ENCODE measurements at regions of chr18 and their contacts with region 1.

Region 1: DNA sequence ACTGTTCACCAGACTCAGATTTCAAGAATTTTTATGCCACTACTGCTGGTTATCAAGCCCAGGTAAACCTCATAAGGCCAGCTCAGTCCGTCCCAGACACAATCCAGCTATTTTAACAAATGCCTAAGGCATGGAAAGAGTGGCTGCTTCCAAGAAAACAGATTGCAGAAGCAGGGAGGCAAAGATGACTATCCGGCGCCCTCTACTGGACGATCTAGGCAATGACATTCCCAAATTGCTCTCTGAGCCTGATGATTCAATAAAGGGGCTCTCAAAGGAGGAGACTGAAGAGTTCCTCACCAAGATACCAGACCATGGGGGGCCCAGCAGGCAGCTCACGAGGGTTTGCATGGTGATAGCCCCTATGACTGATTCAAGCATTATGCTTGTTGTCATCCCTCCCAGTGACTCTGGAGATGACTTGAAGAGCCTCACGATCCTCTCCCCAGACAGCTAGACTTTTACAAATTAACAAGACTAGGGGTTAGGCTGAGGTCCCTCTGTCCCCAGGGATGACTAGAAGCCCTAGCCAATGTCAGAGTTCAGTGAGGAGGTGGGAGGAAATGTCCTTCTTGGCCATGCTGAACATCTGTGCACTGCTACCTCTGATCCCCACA is 25.0 kb downstream of the SERPINB8 start:
- H3K4me3 Mint-ChIP-seq: no peak overlapping the region
- H3K27ac Mint-ChIP-seq: no peak overlapping the region
- H3K4me1 Mint-ChIP-seq: peaks cover 5% of the 10 kb centered on the region
- H3K27me3 Mint-ChIP-seq: no peaks in the 10 kb centered on the region

Region 2: GRCh38 chr18:63890950-63891304 is 104.0 kb before region 1 on chr18:
- intact Hi-C with region 1: loop called (anchors 5 kb)
- H3K4me3 Mint-ChIP-seq: no peak overlapping the region
- H3K27ac Mint-ChIP-seq: peak overlapping the region; percentile 62
- H3K4me1 Mint-ChIP-seq: peaks cover 80% of the 10 kb centered on the region
- H3K27me3 Mint-ChIP-seq: no peaks in the 10 kb centered on the region

Region 3: DNA sequence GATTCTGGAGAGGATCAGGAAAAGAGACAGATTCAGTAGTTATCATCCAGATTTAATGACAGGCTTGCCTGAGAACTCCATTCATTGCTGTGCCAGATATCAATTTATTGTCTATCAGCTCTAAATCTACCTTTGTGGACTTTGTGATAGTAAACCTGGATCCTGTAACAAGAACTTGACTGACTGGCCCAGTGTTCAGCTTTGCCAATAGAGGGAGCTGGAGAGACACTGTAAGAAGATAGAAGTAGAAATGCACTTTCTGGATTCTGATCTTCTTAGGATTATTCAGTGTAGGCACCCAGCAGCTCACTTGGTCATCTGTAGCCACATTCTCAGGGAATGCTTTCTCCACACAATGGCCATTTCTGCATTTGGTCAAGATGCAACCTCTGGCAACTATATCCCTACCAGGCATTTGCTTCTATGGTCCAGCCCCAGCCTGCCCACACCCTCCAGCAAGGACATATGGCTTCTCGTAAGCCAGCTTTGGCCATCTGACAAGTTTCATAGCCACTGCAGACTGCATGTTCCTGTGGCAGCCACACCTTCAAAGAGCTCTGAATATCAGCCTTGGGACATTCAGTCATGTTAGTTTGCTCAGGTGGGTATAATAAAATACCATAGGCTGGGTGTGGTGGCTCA is 31.2 kb before region 1 on chr18:
- intact Hi-C with region 1: loop called (anchors 1 kb)
- H3K4me3 Mint-ChIP-seq: no peak overlapping the region
- H3K27ac Mint-ChIP-seq: peak overlapping the region; percentile 30
- H3K4me1 Mint-ChIP-seq: peaks cover 50% of the 10 kb centered on the region
- H3K27me3 Mint-ChIP-seq: no peaks in the 10 kb centered on the region

Measured in dendritic cell treated with granulocyte-macrophage colony-stimulating factor and Interleukin-4, amounts not matched to agents 40 ng/mL and 50 ng/mL, for 4 days (primary cell).